Posterior vena cava (tissue), 2 donors: ENCODE measurements at regions of chr16 and their contacts with region 1.

Region 1: GRCh38 chr16:10600533-10601443 is 20.4 kb upstream of the EMP2 start:
- DNase-seq: no peak

Region 2: GRCh38 chr16:10514369-10515055 is 86.3 kb before region 1 on chr16:
- intact Hi-C with region 1: no loop called
- DNase-seq: no peak

Region 3: DNA sequence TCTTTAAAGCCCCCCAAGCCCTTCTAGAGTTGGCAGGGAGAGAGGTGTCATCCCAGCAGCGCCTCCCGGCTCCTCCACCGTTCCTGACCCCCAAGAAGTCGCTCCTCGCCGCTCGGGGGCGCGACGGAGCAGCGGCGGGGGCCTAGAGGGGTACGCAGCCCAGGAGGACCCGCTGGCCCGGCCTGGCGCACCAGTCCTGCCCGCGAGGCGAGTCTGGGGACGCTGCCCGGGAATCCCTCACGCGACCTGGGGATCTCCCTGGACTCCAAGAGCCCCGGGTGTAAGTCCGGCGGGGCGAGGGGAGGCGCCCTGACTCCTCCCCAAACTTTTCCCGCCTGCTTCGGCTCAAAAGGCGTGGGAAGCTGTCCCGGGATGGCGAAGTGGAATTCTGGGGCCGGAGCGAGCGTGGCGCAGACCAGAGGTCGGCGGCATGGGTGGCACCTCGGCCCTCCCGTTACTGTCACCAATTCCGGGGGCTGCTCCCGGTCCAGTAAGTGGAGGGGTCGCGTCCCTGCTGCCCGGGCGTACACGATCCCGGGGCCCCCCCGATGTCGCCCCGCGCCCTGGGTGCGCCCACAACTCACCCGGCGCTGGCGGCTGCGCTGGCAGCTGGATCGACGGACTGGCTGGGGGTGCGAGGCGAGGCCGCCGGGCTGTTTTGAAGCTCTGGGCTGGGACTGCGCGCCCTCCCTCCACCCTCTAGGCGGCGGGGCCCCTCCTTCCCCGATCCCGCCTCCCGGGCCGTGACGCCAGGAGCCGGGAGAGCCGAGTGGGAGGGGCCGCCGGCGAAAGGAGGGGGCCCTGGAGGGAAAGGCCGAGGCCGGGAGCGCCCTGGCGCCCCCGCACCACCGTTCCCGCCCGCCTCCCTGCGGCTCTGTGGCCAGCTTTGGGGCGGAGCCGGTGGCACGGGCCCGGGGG is 20.6 kb before region 1 on chr16 and contains the start of gene EMP2:
- intact Hi-C with region 1: loop called in 1 of 2 experiments (anchors 1 kb)
- DNase-seq: peak; percentile 93
- total RNA-seq, gene EMP2: 45.8 to 68.5 TPM